ENCODE measurements at regions of chr12 and their contacts with region 1.

Region 1: DNA sequence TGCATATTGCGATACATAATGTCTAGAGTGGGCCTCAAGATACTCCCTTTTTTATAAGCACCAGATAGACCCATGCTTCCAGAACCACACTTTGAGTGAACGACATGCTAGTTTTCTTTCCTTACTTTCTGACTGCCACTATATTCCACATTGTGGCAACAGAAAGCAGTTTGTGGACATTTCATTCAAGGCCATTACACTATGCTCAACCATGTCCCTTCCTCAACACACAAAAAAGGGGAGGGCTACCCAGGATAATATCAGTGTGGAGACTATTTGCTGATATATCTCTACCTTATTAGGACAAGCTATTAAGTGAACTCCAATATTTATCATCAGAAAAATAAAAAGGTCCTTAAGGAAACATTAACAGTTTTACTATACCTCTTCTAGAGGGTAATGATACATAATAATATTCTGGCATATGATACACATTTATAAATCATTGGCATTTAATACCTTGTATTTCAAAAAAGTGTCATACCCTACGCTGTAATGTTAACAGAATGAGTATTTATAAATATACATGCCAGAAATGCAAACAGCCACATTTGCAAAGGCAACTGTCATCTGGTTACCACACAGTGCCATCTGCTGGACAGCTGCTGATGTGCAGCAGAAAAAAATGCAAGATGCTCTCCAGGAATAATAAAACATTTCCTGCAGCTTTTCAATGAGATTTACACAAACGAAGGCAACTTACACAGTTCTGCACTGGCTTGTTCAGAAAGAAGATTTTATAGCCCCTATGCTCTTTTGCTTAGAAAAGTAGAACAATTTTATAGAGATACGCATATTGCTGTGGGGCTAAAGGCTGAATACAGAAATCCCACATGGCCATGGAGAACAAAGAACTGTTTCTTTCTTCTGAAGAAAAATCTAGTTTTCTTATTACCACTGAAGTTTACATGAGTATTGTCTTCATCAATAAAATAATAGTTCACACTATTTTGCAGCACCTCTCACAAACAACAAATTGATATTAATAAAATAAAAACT is 182.2 kb upstream of the GRIP1 start:
- DNase-seq: peak; percentile 3 to 77
- H3K4me3 ChIP-seq: no peak overlapping the region
- H3K27ac ChIP-seq: no peak overlapping the region
- H3K4me1 ChIP-seq: no peaks in the 10 kb centered on the region
- H3K27me3 ChIP-seq: no peaks in the 10 kb centered on the region
- CTCF ChIP-seq: peak; percentile 58 to 82 (median 81)
- EP300 ChIP-seq: no peak
- POLR2A ChIP-seq: no peak
- RAD21 ChIP-seq: peak; percentile 88

Region 2: DNA sequence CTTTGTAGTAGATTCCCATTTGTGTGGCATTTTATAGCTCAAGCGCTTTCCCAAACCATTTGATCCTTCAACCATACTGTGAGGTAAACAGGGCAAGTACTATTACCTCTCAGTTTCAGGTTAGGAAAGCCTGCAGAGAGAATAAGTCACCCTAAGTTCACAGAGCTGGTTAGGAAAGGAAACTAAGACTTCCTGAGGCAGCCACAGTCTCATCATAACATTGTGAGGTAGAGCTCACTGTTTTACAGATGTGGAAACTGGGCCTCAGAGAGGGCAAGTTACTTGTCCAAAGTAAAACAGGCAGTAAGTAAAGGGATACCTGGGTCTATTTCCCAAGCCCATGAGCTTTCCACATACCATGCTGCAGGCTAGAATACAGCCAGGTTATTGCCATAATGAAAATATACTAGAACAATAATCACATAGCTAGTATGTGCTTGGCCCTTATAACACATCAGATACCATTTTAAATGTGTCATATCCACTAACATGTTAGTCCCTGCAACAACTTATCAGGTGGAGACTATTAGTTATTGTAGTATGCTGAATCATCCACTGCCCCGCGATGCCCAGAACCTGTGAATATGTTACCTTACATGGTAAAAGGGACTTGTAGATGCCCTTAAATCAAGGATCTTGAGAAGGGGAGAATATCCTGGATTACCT is 31.3 kb before region 1 on chr12:
- CTCF ChIA-PET with region 1: no interaction called
- POLR2A ChIA-PET with region 1: no interaction called
- DNase-seq: no peak
- H3K4me3 ChIP-seq: no peak overlapping the region
- H3K27ac ChIP-seq: no peak overlapping the region
- H3K4me1 ChIP-seq: no peaks in the 10 kb centered on the region
- H3K27me3 ChIP-seq: no peaks in the 10 kb centered on the region; a peak in 1 of 7 replicates
- CTCF ChIP-seq: no peak
- EP300 ChIP-seq: no peak
- POLR2A ChIP-seq: no peak
- RAD21 ChIP-seq: no peak

Region 3: DNA sequence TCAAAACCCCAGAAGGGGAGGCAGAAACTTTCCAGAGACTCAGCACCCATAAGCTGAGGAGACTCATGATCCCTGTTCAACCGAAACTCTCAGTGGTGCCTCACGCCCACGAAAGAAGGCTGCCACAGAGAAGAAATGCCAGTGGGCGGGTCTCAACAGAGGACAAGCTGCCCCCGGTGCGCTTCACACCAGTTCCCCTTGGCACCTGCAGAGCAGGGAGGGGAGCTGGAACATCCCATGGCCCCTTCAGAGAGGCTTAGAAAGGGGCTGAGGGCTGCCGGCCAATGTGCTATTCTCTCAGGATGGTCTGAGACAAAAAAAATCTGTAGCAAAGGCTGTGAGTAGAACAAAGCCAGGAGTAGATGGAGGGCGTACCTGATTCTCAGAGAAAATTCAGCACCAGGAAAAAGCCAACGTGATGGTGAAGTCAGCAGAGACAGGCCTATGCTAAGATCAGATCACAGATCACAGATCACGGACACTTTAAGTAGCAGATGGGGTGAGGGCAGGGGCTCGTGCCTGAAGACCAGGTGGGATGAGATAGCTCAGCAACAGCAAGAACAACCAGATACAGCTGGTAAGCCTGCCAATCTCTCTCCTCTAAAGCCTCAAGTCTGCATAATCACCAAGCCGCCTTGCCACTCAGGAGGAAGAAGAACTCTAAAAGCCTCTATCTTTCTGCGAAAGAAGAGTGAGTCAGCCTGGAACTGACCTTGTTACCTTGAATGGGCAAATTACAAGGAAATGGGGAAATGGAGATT is 24.2 kb after region 1 on chr12:
- CTCF ChIA-PET with region 1: interaction called, 12 read pairs
- POLR2A ChIA-PET with region 1: no interaction called
- DNase-seq: no peak
- H3K4me3 ChIP-seq: no peak overlapping the region
- H3K27ac ChIP-seq: no peak overlapping the region
- H3K4me1 ChIP-seq: peaks cover 0 to 12% (median 7%) of the 10 kb centered on the region in 4 experiments; a peak in 4 of 7 replicates
- H3K27me3 ChIP-seq: no peaks in the 10 kb centered on the region
- CTCF ChIP-seq: no peak
- EP300 ChIP-seq: no peak
- POLR2A ChIP-seq: no peak
- RAD21 ChIP-seq: no peak